A673 (cell line): ENCODE measurements at regions of chr1 and their contacts with region 1.

Region 1: GRCh38 chr1:78839704-78840277 is 166.7 kb downstream of the ADGRL4 start:
- DNase-seq: peak; percentile 62
- H3K4me3 ChIP-seq: no peak overlapping the region
- H3K27ac ChIP-seq: no peak overlapping the region
- H3K4me1 ChIP-seq: peaks cover 23% of the 10 kb centered on the region
- H3K27me3 ChIP-seq: no peaks in the 10 kb centered on the region
- CTCF ChIP-seq: peak; percentile 84

Region 2: GRCh38 chr1:78607334-78607927 is 232.4 kb before region 1 on chr1:
- CTCF ChIA-PET with region 1: no interaction called
- POLR2A ChIA-PET with region 1: no interaction called
- intact Hi-C with region 1: no loop called
- DNase-seq: peak; percentile 54
- H3K4me3 ChIP-seq: no peak overlapping the region
- H3K27ac ChIP-seq: no peak overlapping the region
- H3K4me1 ChIP-seq: no peaks in the 10 kb centered on the region
- H3K27me3 ChIP-seq: no peaks in the 10 kb centered on the region
- CTCF ChIP-seq: peak; percentile 74

Region 3: GRCh38 chr1:78688701-78689100 is 151.1 kb before region 1 on chr1:
- CTCF ChIA-PET with region 1: interaction called, 3 read pairs
- POLR2A ChIA-PET with region 1: no interaction called
- intact Hi-C with region 1: loop called (anchors 2 kb)
- DNase-seq: peak; percentile 57
- H3K4me3 ChIP-seq: no peak overlapping the region
- H3K27ac ChIP-seq: no peak overlapping the region
- H3K4me1 ChIP-seq: no peaks in the 10 kb centered on the region
- H3K27me3 ChIP-seq: no peaks in the 10 kb centered on the region
- CTCF ChIP-seq: peak; percentile 54

Region 4: DNA sequence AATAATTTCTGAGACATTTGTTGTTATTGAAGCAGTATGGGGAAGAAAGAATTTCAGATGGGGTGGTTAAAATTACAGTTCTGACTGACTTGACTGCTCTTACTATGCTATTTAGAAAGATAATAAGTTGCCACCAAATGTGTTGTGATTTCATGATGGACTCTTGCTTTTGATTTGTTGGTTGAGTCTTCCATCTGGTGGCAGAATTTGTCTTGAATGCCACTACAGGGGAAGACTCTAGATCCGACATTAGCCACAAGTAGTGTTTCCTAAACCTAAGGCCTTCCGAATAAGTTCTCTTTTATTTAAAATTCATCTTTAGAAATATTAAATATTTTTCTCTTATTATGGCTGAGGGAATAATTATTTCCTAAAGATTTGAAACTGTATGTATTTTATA is 357.6 kb after region 1 on chr1:
- CTCF ChIA-PET with region 1: interaction called, 7 read pairs
- POLR2A ChIA-PET with region 1: no interaction called
- intact Hi-C with region 1: loop called (anchors 1 kb)
- DNase-seq: peak; percentile 60
- H3K4me3 ChIP-seq: no peak overlapping the region
- H3K27ac ChIP-seq: no peak overlapping the region
- H3K4me1 ChIP-seq: peaks cover 3% of the 10 kb centered on the region
- H3K27me3 ChIP-seq: no peaks in the 10 kb centered on the region
- CTCF ChIP-seq: peak; percentile 63

Region 5: GRCh38 chr1:79259388-79260336 is 419.9 kb after region 1 on chr1:
- CTCF ChIA-PET with region 1: interaction called, 4 read pairs
- POLR2A ChIA-PET with region 1: no interaction called
- intact Hi-C with region 1: loop called (anchors 2 kb)
- DNase-seq: peak; percentile 68
- H3K4me3 ChIP-seq: no peak overlapping the region
- H3K27ac ChIP-seq: no peak overlapping the region
- H3K4me1 ChIP-seq: peaks cover 36% of the 10 kb centered on the region
- H3K27me3 ChIP-seq: no peaks in the 10 kb centered on the region
- CTCF ChIP-seq: peak; percentile 80

Region 6: DNA sequence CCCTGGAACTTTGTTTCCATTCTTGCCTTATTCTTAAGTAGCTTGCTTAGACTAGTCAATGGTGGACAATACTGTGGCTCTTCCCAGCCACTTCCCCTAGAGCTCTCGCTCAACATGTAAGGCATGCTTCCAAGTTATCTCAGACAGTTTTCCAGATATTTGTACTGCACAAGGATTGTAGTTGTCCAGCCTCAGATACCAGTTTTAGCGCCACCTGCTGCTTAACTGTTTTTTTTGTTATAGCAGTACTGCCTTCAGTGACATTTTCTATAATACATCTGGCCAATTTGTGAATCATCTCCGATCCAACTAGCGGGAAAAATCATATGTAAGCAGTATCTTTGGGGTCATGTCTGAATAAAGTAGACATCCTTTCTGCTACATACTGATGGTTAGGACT is 513.4 kb after region 1 on chr1:
- CTCF ChIA-PET with region 1: interaction called, 3 read pairs
- POLR2A ChIA-PET with region 1: no interaction called
- intact Hi-C with region 1: loop called (anchors 10 kb)
- DNase-seq: peak; percentile 76
- H3K4me3 ChIP-seq: no peak overlapping the region
- H3K27ac ChIP-seq: no peak overlapping the region
- H3K4me1 ChIP-seq: no peaks in the 10 kb centered on the region
- H3K27me3 ChIP-seq: no peaks in the 10 kb centered on the region
- CTCF ChIP-seq: peak; percentile 80

Region 7: DNA sequence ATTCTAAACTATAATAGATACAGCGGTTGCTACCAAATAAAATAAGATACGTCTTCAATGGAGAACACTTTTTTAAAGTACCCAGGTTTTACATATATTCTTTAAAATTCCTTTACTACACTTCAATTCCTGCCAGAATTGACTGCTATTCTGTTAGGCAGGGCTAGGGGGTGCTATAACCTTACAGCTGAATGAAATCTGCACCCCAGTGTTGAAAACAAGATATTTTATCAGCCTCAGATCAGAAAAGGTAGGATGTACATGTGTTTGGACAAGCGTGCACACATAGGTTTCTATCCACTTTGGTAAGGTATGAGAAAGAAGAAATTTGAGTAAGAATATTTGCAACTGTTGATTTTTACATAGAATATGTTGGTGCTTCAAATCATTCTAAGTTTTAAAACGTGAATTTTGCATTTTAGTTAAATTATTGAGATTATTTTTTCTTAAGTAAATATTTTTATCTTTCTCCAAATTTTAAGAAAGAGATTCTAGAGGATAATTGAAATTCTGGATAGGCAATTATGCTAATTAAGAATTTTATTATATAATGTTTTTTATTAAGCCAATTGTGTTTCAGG is 657.5 kb after region 1 on chr1:
- CTCF ChIA-PET with region 1: no interaction called
- POLR2A ChIA-PET with region 1: no interaction called
- intact Hi-C with region 1: loop called (anchors 5 kb)
- DNase-seq: peak; percentile 65
- H3K4me3 ChIP-seq: no peak overlapping the region
- H3K27ac ChIP-seq: no peak overlapping the region
- H3K4me1 ChIP-seq: no peaks in the 10 kb centered on the region
- H3K27me3 ChIP-seq: no peaks in the 10 kb centered on the region
- CTCF ChIP-seq: peak; percentile 96

Region 8: GRCh38 chr1:80218112-80218511 is 1378.3 kb after region 1 on chr1:
- CTCF ChIA-PET with region 1: no interaction called
- POLR2A ChIA-PET with region 1: no interaction called
- intact Hi-C with region 1: loop called (anchors 10 kb)
- DNase-seq: peak; percentile 67
- H3K4me3 ChIP-seq: no peak overlapping the region
- H3K27ac ChIP-seq: no peak overlapping the region
- H3K4me1 ChIP-seq: no peaks in the 10 kb centered on the region
- H3K27me3 ChIP-seq: no peaks in the 10 kb centered on the region
- CTCF ChIP-seq: peak; percentile 65